Left ventricle myocardium inferior (tissue), 1 donor: ENCODE measurements at regions of chr10 and their contacts with region 1.

Region 1: GRCh38 chr10:99435986-99436638 is 5.7 kb upstream of the GOT1 start:
- DNase-seq: no peak
- H3K4me3 ChIP-seq: no peak overlapping the region
- H3K27ac ChIP-seq: no peak overlapping the region
- H3K4me1 ChIP-seq: peaks cover 46% of the 10 kb centered on the region
- H3K27me3 ChIP-seq: no peaks in the 10 kb centered on the region
- CTCF ChIP-seq: peak; percentile 64

Region 2: GRCh38 chr10:99615271-99615825 is 179.2 kb after region 1 on chr10:
- intact Hi-C with region 1: loop called (anchors 2 kb)
- DNase-seq: no peak
- H3K4me3 ChIP-seq: no peak overlapping the region
- H3K27ac ChIP-seq: no peak overlapping the region
- H3K4me1 ChIP-seq: peaks cover 48% of the 10 kb centered on the region
- H3K27me3 ChIP-seq: no peaks in the 10 kb centered on the region
- CTCF ChIP-seq: no peak

Region 3: GRCh38 chr10:99870123-99870730 is 434.1 kb after region 1 on chr10:
- intact Hi-C with region 1: no loop called
- DNase-seq: no peak
- H3K4me3 ChIP-seq: no peak overlapping the region
- H3K27ac ChIP-seq: no peak overlapping the region
- H3K4me1 ChIP-seq: peaks cover 10% of the 10 kb centered on the region
- H3K27me3 ChIP-seq: peaks cover 26% of the 10 kb centered on the region
- CTCF ChIP-seq: no peak